Activated CD8-positive, alpha-beta T cell treated with anti-CD3 and anti-CD28 coated beads, Interleukin-2, amount 10 ng/mL, durations not matched to agents 7 days and 5 days (primary cell): ENCODE measurements at regions of chr10 and their contacts with region 1.

Region 1: GRCh38 chr10:72337020-72337629 is 17.6 kb downstream of the DNAJB12 start:
- DNase-seq: peak; percentile 75
- ATAC-seq: no peak
- H3K4me3 Mint-ChIP-seq: no peak overlapping the region
- H3K27ac Mint-ChIP-seq: peak overlapping the region; percentile 22
- H3K4me1 Mint-ChIP-seq: peaks cover 71% of the 10 kb centered on the region
- H3K27me3 Mint-ChIP-seq: no peaks in the 10 kb centered on the region

Region 2: GRCh38 chr10:72088889-72089575 is 248.1 kb before region 1 on chr10:
- CTCF ChIA-PET with region 1: interaction called, 12 read pairs
- POLR2A ChIA-PET with region 1: interaction called, 14 read pairs
- DNase-seq: peak; percentile 73
- ATAC-seq: peak; percentile 54
- H3K4me3 Mint-ChIP-seq: peak overlapping the region; percentile 97
- H3K27ac Mint-ChIP-seq: peak overlapping the region; percentile 99
- H3K4me1 Mint-ChIP-seq: peaks cover 56% of the 10 kb centered on the region
- H3K27me3 Mint-ChIP-seq: no peaks in the 10 kb centered on the region

Region 3: DNA sequence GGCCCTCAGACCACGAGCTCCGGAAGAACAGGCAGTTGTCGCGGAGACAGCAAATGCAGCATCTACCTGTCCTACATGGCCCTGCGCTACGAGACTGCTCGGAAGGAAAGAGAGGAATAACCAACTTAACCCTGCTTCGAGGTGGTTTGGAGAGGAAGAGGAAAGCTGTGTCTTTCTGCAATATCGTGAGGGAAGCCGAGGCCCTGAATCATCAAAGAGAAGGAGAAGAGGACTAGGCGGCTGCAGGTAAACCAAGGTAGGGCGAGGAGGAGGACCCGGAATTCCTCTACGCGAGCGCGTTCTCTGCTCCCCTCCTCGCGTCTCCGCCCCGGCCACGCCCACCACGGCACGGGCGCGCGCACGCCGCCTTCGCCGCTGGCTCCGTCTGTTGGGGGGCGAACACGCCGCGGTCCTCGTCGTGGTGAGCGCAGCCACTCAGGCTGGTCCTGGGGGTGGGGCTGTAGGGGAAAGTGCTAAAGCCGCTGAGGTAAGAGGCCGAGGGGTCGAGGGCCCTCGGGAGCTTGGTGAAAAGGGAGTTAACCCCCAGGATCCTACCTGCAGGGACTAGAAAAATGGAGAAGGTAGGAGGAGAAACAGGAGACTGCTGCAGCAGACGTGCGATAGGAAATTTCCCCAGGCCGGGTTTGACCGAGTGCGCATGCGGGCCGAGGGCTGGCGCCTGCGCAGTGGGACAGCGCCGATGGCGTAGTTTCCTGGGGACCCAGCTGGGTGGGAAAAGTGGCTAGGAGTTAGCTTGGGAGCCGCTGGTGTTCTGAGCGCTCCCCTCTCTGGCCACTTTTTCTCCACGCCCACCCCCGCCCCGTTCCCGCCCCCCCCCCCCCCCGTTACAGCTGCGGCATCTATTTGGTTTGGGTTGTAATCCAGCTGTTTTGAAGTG is 121.2 kb before region 1 on chr10 and contains the starts of genes ANAPC16 and ASCC1:
- CTCF ChIA-PET with region 1: interaction called, 22 read pairs
- POLR2A ChIA-PET with region 1: interaction called, 13 read pairs
- DNase-seq: peak; percentile 95
- ATAC-seq: peak; percentile 88
- H3K4me3 Mint-ChIP-seq: peak within 1 kb of the TSS; percentile 96
- H3K27ac Mint-ChIP-seq: peak within 1 kb of the TSS; percentile 96
- H3K4me1 Mint-ChIP-seq: peaks cover 52% of the 10 kb centered on the region
- H3K27me3 Mint-ChIP-seq: no peaks in the 10 kb centered on the region
- total RNA-seq, gene ANAPC16: 72.9 TPM
- total RNA-seq, gene ASCC1: 34.8 to 40.3 TPM

Region 4: DNA sequence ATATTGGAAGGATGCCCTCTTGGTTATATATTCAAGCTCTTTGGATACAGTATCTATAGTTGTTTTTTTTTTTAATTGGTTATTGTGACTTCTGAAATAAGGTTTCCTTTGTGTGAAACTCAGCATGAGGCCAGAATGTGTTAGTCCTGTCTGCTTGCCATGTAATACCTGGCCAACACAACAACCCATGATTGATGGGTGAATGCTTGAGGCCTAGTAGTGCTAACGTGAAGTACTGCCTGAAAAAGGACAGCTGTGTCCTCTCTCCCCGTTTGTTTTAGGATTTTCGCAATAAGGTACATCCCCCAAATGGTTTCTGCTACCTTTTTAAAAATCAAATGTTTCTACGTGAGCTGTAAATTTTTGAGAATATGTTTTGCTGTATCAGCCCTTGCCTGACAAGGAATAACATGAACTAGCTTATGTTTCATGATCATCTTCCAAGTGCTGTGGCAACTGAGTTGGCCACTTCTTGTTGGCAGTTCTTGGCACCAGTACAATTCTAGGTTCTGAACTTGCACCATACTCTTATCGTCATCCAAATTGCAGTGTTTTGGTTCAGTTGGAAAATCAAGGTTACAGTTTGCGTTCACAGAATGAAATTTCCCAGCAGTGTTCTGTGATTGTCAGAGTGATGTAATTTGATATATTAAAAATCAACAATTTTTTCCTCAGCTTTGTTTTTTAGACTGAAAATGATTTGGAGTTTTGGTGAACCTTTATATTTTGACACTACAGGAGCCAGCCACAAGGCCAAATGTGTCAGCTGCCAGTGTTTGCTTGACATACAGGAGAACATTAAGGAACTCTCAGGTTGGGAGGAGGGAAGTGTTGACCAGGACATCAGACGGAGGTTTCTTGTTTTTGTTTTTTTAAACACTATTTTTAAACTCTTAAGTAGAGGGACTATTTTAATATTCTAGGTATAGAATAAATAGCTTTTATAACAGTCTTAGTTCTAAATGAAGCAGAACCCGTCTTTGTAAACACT is 107.6 kb before region 1 on chr10:
- CTCF ChIA-PET with region 1: interaction called, 16 read pairs
- POLR2A ChIA-PET with region 1: interaction called, 4 read pairs
- DNase-seq: no peak
- ATAC-seq: no peak
- H3K4me3 Mint-ChIP-seq: no peak overlapping the region
- H3K27ac Mint-ChIP-seq: peak overlapping the region; percentile 69
- H3K4me1 Mint-ChIP-seq: peaks cover 32% of the 10 kb centered on the region
- H3K27me3 Mint-ChIP-seq: no peaks in the 10 kb centered on the region

Region 5: GRCh38 chr10:72254813-72255568 is 82.1 kb before region 1 on chr10:
- CTCF ChIA-PET with region 1: interaction called, 53 read pairs
- POLR2A ChIA-PET with region 1: interaction called, 12 read pairs
- DNase-seq: peak; percentile 73
- ATAC-seq: peak; percentile 79
- H3K4me3 Mint-ChIP-seq: peak overlapping the region; percentile 77
- H3K27ac Mint-ChIP-seq: peak overlapping the region; percentile 95
- H3K4me1 Mint-ChIP-seq: peaks cover 78% of the 10 kb centered on the region
- H3K27me3 Mint-ChIP-seq: no peaks in the 10 kb centered on the region

Region 6: GRCh38 chr10:72308320-72308987 is 28.7 kb before region 1 on chr10:
- CTCF ChIA-PET with region 1: interaction called, 13 read pairs
- POLR2A ChIA-PET with region 1: interaction called, 4 read pairs
- DNase-seq: peak; percentile 53
- ATAC-seq: peak; percentile 53
- H3K4me3 Mint-ChIP-seq: no peak overlapping the region
- H3K27ac Mint-ChIP-seq: peak overlapping the region; percentile 80
- H3K4me1 Mint-ChIP-seq: peaks cover 76% of the 10 kb centered on the region
- H3K27me3 Mint-ChIP-seq: no peaks in the 10 kb centered on the region